Activated CD8-positive, alpha-beta T cell treated with anti-CD3 and anti-CD28 coated beads for 36 hours (primary cell): ENCODE measurements at regions of chr11 and their contacts with region 1.

Region 1: GRCh38 chr11:7690648-7691047 is 15.6 kb downstream of the OVCH2 start:
- DNase-seq: no peak
- ATAC-seq: no peak
- H3K4me3 Mint-ChIP-seq: no peak overlapping the region
- H3K27ac Mint-ChIP-seq: no peak overlapping the region
- H3K4me1 Mint-ChIP-seq: peaks cover 4% of the 10 kb centered on the region
- H3K27me3 Mint-ChIP-seq: peaks cover 31% of the 10 kb centered on the region
- CTCF ChIP-seq: no peak

Region 2: GRCh38 chr11:7278314-7278917 is 412.2 kb before region 1 on chr11:
- CTCF ChIA-PET with region 1: interaction called, 10 read pairs
- POLR2A ChIA-PET with region 1: no interaction called
- intact Hi-C with region 1: no loop called
- DNase-seq: peak; percentile 7
- ATAC-seq: no peak
- H3K4me3 Mint-ChIP-seq: no peak overlapping the region
- H3K27ac Mint-ChIP-seq: no peak overlapping the region
- H3K4me1 Mint-ChIP-seq: no peaks in the 10 kb centered on the region
- H3K27me3 Mint-ChIP-seq: peaks cover 13% of the 10 kb centered on the region
- CTCF ChIP-seq: peak; percentile 58

Region 3: GRCh38 chr11:7513234-7514098 is 177.2 kb before region 1 on chr11 and contains the start of gene PPFIBP2:
- CTCF ChIA-PET with region 1: interaction called, 4 read pairs
- POLR2A ChIA-PET with region 1: no interaction called
- intact Hi-C with region 1: loop called (anchors 10 kb)
- DNase-seq: peak; percentile 82
- ATAC-seq: peak; percentile 89
- H3K4me3 Mint-ChIP-seq: peak within 1 kb of the TSS; percentile 86
- H3K27ac Mint-ChIP-seq: peak within 1 kb of the TSS; percentile 90
- H3K4me1 Mint-ChIP-seq: peaks cover 25% of the 10 kb centered on the region
- H3K27me3 Mint-ChIP-seq: peaks cover 4% of the 10 kb centered on the region
- CTCF ChIP-seq: peak; percentile 93
- total RNA-seq, gene PPFIBP2: 13.3 to 14.2 TPM

Region 4: GRCh38 chr11:7592711-7593110 is 97.9 kb before region 1 on chr11:
- CTCF ChIA-PET with region 1: no interaction called
- POLR2A ChIA-PET with region 1: no interaction called
- intact Hi-C with region 1: no loop called
- DNase-seq: no peak
- ATAC-seq: no peak
- H3K4me3 Mint-ChIP-seq: no peak overlapping the region
- H3K27ac Mint-ChIP-seq: no peak overlapping the region
- H3K4me1 Mint-ChIP-seq: peaks cover 14% of the 10 kb centered on the region
- H3K27me3 Mint-ChIP-seq: no peaks in the 10 kb centered on the region
- CTCF ChIP-seq: no peak

Region 5: GRCh38 chr11:7749456-7749855 is 58.8 kb after region 1 on chr11:
- CTCF ChIA-PET with region 1: no interaction called
- POLR2A ChIA-PET with region 1: no interaction called
- intact Hi-C with region 1: no loop called
- DNase-seq: no peak
- ATAC-seq: no peak
- H3K4me3 Mint-ChIP-seq: no peak overlapping the region
- H3K27ac Mint-ChIP-seq: no peak overlapping the region
- H3K4me1 Mint-ChIP-seq: no peaks in the 10 kb centered on the region
- H3K27me3 Mint-ChIP-seq: peaks cover 1% of the 10 kb centered on the region
- CTCF ChIP-seq: no peak